ENCODE measurements at regions of chr18 and their contacts with region 1.

Region 1: GRCh38 chr18:5073026-5073944 is 123.8 kb downstream of the AKAIN1 start:
- DNase-seq: no peak
- ATAC-seq: peak in 1 of 4 donors; percentile 72
- H3K4me3 ChIP-seq: no peak overlapping the region
- H3K27ac ChIP-seq: no peak overlapping the region
- H3K4me1 ChIP-seq: no peaks in the 10 kb centered on the region
- H3K27me3 ChIP-seq: no peaks in the 10 kb centered on the region
- CTCF ChIP-seq: peak; percentile 38

Region 2: GRCh38 chr18:5021558-5021957 is 51.7 kb before region 1 on chr18:
- intact Hi-C with region 1: no loop called
- DNase-seq: no peak
- ATAC-seq: no peak
- H3K4me3 ChIP-seq: no peak overlapping the region
- H3K27ac ChIP-seq: no peak overlapping the region
- H3K4me1 ChIP-seq: no peaks in the 10 kb centered on the region
- H3K27me3 ChIP-seq: no peaks in the 10 kb centered on the region
- CTCF ChIP-seq: no peak

Region 3: GRCh38 chr18:5106730-5107129 is 33.4 kb after region 1 on chr18:
- intact Hi-C with region 1: no loop called
- DNase-seq: no peak
- ATAC-seq: no peak
- H3K4me3 ChIP-seq: no peak overlapping the region
- H3K27ac ChIP-seq: no peak overlapping the region
- H3K4me1 ChIP-seq: no peaks in the 10 kb centered on the region
- H3K27me3 ChIP-seq: no peaks in the 10 kb centered on the region
- CTCF ChIP-seq: no peak

Region 4: DNA sequence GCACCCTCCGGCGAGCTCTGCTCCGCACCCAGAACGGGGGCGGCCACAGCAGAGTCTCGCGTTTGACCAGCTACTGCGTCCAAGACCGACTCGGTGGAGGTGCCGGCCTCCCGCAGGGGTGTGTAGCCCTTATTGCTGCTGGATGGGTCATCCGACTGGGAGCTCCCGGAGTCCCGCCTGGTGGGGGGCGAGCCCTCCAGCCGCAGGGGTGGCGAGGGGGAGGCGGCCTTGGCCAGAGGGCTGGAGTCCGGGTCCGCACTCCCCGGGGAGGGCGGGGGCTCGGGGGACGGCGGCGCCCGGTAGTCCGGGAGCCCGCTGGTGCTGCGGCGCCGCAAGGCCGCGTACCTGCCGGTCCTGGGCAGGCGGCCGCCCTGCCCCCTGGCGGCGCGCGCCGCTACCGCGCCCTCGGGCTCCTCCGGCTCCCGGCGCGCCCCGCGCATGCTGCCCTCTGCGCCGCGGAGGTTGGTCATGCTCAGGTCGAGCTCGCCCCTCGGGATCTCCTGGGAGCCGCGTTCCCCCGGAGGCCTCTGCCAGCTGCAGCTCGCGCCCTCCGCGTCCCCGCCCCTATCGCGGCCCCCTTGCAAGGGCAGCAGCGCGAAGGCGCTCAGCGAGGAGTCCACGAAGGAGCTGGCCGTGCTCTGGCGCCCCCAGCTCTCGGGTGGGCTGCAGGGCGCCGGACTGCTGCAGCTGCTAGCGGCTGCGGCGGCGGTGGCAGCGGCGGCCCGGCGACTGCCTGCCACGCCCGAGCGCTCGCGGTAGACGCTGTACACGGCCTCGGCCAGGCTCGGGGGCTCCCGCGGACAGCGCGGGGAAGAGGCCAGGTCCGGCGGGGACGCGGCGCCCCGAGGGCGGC is 817.3 kb after region 1 on chr18:
- intact Hi-C with region 1: loop called in 1 of 2 experiments (anchors 10 kb)
- DNase-seq: peak; percentile 46 to 59
- ATAC-seq: peak; percentile 80 to 92 (median 88)
- H3K4me3 ChIP-seq: peak overlapping the region; percentile 65
- H3K27ac ChIP-seq: no peak overlapping the region
- H3K4me1 ChIP-seq: peaks cover 4% of the 10 kb centered on the region
- H3K27me3 ChIP-seq: peaks cover 13 to 83% (median 25%) of the 10 kb centered on the region in 3 donors
- CTCF ChIP-seq: peak; percentile 62